ENCODE measurements at regions of chr9 and their contacts with region 1.

Region 1: DNA sequence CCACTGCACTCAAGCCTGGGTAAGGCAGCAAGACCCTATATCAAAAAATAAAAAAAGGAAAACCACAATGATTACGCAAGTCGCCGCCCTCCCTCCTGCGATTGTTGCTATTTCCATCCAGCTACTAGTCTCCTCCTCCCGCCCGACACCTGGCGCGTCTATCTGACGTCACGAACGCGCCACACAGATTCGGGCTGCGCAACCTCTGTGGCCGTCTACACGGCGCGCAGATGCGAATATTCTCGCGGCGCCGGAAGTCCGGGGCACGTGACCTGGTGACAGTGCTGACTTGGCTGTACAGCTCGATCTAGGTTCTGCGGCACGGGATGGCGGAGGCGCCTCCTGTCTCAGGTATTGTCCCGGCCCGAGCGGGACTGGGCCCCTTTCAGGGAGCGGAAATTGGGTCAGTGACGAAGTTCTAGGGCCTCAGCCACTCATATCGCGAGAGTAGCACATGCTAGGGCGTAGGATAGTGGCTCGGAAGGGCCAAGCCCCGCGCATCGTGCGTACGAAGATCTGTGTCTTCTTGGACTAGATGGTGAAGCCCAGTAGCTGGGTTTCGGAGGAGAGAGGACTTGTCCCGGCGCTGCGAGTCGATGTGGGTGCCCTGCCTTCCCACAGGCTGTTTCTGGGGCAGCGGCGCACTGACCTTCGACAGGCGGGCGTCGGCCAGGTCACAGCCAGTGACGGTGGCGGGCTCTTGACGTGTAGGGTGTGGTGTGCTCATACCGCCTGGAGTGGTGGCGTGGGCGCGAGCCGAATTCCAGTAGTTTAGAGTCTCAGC is at the start of gene NFX1:
- DNase-seq: peak; percentile 100
- ATAC-seq: peak; percentile 82
- H3K4me3 ChIP-seq: peak within 1 kb of the TSS; percentile 80 to 98 (median 86)
- H3K4me3 Mint-ChIP-seq: peak within 1 kb of the TSS; percentile 99
- H3K27ac ChIP-seq: peak within 1 kb of the TSS; percentile 99 to 100
- H3K27ac Mint-ChIP-seq: peak within 1 kb of the TSS; percentile 100
- H3K4me1 ChIP-seq: peaks cover 43 to 58% of the 10 kb centered on the region in 2 donors
- H3K4me1 Mint-ChIP-seq: peaks cover 62% of the 10 kb centered on the region
- H3K27me3 ChIP-seq: no peaks in the 10 kb centered on the region
- H3K27me3 Mint-ChIP-seq: no peaks in the 10 kb centered on the region
- CTCF ChIP-seq: no peak
- total RNA-seq, gene NFX1: 76.3 and 81.5 TPM in 2 replicates

Region 2: DNA sequence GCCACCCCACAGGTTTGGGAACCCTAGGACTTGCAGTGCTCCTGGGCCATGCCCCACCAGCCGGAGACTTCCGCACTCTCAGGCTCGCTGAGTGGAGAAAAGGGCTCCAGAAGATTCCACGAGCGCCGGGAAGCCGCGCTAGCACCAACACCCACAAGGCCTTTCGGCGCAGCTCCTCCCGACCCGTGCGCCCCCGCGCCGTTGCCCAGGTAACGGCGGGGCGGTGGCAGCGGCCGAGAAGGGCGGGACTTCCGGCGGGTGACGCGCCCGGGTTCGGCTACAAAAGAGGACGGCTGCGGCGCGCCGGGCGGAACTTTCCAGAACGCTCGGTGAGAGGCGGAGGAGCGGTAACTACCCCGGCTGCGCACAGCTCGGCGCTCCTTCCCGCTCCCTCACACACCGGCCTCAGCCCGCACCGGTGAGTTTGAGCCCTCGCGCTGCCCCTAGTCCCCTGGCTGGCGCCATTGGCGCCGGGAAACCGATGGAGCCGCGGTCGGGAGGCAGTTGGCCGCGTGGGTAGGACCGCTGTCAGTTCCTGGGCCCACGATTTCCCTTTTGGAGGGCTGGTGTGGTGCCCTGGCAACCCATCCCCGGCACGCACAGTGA is 265.4 kb before region 1 on chr9 and contains the start of gene DNAJA1:
- CTCF ChIA-PET with region 1: no interaction called
- POLR2A ChIA-PET with region 1: interaction called, 7 read pairs
- intact Hi-C with region 1: loop called (anchors 1 kb)
- DNase-seq: peak; percentile 96
- ATAC-seq: peak; percentile 83
- H3K4me3 ChIP-seq: peak within 1 kb of the TSS; percentile 74 to 100 (median 100)
- H3K4me3 Mint-ChIP-seq: peak within 1 kb of the TSS; percentile 97
- H3K27ac ChIP-seq: peak within 1 kb of the TSS; percentile 99
- H3K27ac Mint-ChIP-seq: peak within 1 kb of the TSS; percentile 95
- H3K4me1 ChIP-seq: peaks cover 17 to 34% of the 10 kb centered on the region in 2 donors
- H3K4me1 Mint-ChIP-seq: peaks cover 59% of the 10 kb centered on the region
- H3K27me3 ChIP-seq: no peaks in the 10 kb centered on the region
- H3K27me3 Mint-ChIP-seq: no peaks in the 10 kb centered on the region
- CTCF ChIP-seq: no peak
- total RNA-seq, gene DNAJA1: 66.6 and 68.6 TPM in 2 replicates

Region 3: DNA sequence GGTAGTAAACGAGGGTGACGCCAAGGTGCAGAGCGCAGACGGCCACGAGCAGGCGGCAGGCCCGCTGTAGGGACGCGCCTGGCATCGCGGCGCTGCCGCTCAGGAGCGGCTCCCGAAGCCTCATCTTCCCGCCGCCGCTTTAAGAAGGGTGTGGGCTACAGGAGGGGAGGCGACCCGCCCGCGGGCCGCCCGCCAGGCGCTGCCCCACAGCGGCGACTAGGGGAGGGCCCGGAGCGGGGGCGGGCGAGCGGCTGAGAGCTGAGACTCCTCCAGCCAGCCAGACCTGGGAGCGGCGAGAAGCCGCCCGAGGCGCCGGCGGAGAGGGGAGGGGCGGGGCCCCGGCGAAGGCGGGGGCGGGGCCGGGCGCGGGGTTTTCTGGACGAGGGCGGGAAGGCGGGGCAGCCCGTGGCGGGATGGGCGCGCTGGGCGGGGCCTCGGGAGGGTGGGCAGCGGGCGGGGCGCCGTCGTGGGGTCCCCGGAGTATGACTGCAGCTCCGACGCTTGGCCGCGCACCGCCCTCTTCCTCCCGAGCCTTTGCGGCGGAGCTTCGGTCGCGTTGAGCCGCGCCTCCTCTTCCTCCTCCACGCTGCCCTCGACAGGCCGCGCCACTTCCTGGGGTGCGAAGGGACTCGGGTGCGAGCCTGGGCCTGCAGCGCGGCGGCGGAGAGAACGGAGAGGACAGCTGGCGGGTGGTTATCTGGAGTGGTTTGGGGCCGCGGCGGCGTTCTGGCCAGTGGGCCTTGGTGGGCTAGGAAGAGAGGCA is 123.2 kb before region 1 on chr9 and contains the start of gene B4GALT1:
- CTCF ChIA-PET with region 1: interaction called, 3 read pairs
- POLR2A ChIA-PET with region 1: interaction called, 12 read pairs
- intact Hi-C with region 1: loop called (anchors 10 kb)
- DNase-seq: peak; percentile 96
- ATAC-seq: peak; percentile 77
- H3K4me3 ChIP-seq: peak within 1 kb of the TSS; percentile 95 to 99 (median 98)
- H3K4me3 Mint-ChIP-seq: peak within 1 kb of the TSS; percentile 99
- H3K27ac ChIP-seq: peak within 1 kb of the TSS; percentile 90 to 92
- H3K27ac Mint-ChIP-seq: peak within 1 kb of the TSS; percentile 100
- H3K4me1 ChIP-seq: peaks cover 46 to 59% of the 10 kb centered on the region in 2 donors
- H3K4me1 Mint-ChIP-seq: peaks cover 58% of the 10 kb centered on the region
- H3K27me3 ChIP-seq: no peaks in the 10 kb centered on the region
- H3K27me3 Mint-ChIP-seq: no peaks in the 10 kb centered on the region
- CTCF ChIP-seq: no peak
- total RNA-seq, gene B4GALT1: 197 and 201 TPM in 2 replicates

Region 4: GRCh38 chr9:33277484-33277883 is 13.0 kb before region 1 on chr9:
- CTCF ChIA-PET with region 1: interaction called, 11 read pairs
- POLR2A ChIA-PET with region 1: no interaction called
- intact Hi-C with region 1: no loop called
- DNase-seq: no peak
- ATAC-seq: no peak
- H3K4me3 ChIP-seq: no peak overlapping the region
- H3K4me3 Mint-ChIP-seq: no peak overlapping the region
- H3K27ac ChIP-seq: no peak overlapping the region
- H3K27ac Mint-ChIP-seq: no peak overlapping the region
- H3K4me1 ChIP-seq: no peaks in the 10 kb centered on the region
- H3K4me1 Mint-ChIP-seq: peaks cover 2% of the 10 kb centered on the region
- H3K27me3 ChIP-seq: no peaks in the 10 kb centered on the region
- H3K27me3 Mint-ChIP-seq: no peaks in the 10 kb centered on the region
- CTCF ChIP-seq: no peak

Region 5: DNA sequence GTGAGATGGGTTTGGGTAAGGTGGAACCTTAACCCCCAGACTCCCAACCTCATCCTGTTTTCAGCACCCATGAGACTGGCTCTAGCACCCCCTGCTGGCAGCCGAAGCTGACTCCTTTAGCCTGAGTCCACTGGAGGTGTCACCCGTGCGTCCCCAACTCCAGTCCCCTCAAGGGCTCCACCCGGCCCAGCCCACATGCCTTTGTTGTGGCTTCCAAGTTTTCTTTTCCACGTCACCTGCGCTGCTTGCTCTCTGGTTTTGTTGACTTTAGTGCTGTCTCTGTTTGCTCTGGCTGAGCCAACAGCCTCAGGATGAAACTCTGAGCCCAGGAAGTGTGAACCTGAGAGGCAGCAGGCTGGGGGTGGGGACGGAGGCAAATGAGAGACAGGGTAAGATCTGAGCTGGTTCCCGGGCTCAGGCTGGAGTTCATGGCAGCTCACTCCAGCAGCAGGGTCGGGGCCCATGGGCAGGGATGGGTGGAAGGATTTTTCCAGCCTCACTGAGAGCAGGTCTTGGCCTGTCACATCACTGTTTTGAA is 125.1 kb after region 1 on chr9:
- CTCF ChIA-PET with region 1: interaction called, 21 read pairs
- POLR2A ChIA-PET with region 1: no interaction called
- intact Hi-C with region 1: no loop called
- DNase-seq: peak; percentile 51
- ATAC-seq: no peak
- H3K4me3 ChIP-seq: no peak overlapping the region
- H3K4me3 Mint-ChIP-seq: no peak overlapping the region
- H3K27ac ChIP-seq: no peak overlapping the region
- H3K27ac Mint-ChIP-seq: no peak overlapping the region
- H3K4me1 ChIP-seq: no peaks in the 10 kb centered on the region
- H3K4me1 Mint-ChIP-seq: no peaks in the 10 kb centered on the region
- H3K27me3 ChIP-seq: no peaks in the 10 kb centered on the region
- H3K27me3 Mint-ChIP-seq: peaks cover 15% of the 10 kb centered on the region
- CTCF ChIP-seq: peak; percentile 47

Region 6: GRCh38 chr9:33480087-33480486 is 189.6 kb after region 1 on chr9:
- CTCF ChIA-PET with region 1: no interaction called
- POLR2A ChIA-PET with region 1: no interaction called
- intact Hi-C with region 1: no loop called
- DNase-seq: no peak
- ATAC-seq: no peak
- H3K4me3 ChIP-seq: no peak overlapping the region
- H3K4me3 Mint-ChIP-seq: no peak overlapping the region
- H3K27ac ChIP-seq: no peak overlapping the region
- H3K27ac Mint-ChIP-seq: no peak overlapping the region
- H3K4me1 ChIP-seq: no peaks in the 10 kb centered on the region
- H3K4me1 Mint-ChIP-seq: no peaks in the 10 kb centered on the region
- H3K27me3 ChIP-seq: no peaks in the 10 kb centered on the region
- H3K27me3 Mint-ChIP-seq: peaks cover 1% of the 10 kb centered on the region
- CTCF ChIP-seq: no peak

Region 7: DNA sequence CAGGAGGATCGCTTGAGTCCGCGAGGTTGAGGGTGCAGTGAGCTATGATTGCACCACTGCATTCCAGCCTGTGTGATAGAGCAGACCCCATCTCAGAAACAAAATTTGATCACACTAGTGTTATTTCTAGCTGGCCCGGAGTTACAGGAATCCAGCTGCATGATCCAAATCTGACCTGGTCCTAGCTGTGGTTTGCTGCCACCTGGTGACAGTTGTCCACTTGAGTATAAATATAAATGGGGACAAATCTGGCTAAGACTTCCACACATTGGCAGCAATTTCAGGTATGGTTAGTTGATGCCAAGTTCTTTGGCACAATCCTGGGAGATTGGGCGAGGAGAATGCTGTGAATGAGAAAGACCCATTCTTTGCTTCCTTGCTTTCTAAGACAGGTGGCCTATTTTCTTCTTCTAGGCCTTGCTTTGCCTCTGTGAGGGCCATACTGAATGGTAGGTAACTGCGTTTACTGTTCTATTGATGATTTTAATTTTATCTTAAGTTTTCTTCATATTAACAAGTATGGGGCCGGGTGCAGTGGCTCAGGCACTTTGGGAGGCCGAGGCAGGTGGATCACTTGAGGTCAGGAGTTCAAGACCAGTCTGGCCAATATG is 561.9 kb after region 1 on chr9:
- CTCF ChIA-PET with region 1: no interaction called
- POLR2A ChIA-PET with region 1: no interaction called
- intact Hi-C with region 1: no loop called
- DNase-seq: peak; percentile 77
- ATAC-seq: peak; percentile 83
- H3K4me3 ChIP-seq: no peak overlapping the region
- H3K4me3 Mint-ChIP-seq: no peak overlapping the region
- H3K27ac ChIP-seq: peak overlapping the region in 1 of 2 donors; percentile 37
- H3K27ac Mint-ChIP-seq: no peak overlapping the region
- H3K4me1 ChIP-seq: peaks cover 12 to 19% of the 10 kb centered on the region in 2 donors
- H3K4me1 Mint-ChIP-seq: peaks cover 39% of the 10 kb centered on the region
- H3K27me3 ChIP-seq: no peaks in the 10 kb centered on the region
- H3K27me3 Mint-ChIP-seq: no peaks in the 10 kb centered on the region
- CTCF ChIP-seq: peak; percentile 64